A549 (cell line): ENCODE measurements at regions of chr1 and their contacts with region 1.

Region 1: GRCh38 chr1:200379431-200379755 is 30.4 kb downstream of the ZNF281 start:
- DNase-seq: peak; percentile 81 to 92
- ATAC-seq: peak; percentile 86 to 88
- H3K4me3 ChIP-seq: no peak overlapping the region
- H3K27ac ChIP-seq: peak overlapping the region; percentile 88 to 95
- H3K4me1 ChIP-seq: peaks cover 90% of the 10 kb centered on the region
- CTCF ChIP-seq: no peak
- EP300 ChIP-seq: peak; percentile 95 to 96
- POLR2A ChIP-seq: no peak
- RAD21 ChIP-seq: peak; percentile 34 to 71; a peak in 4 of 5 replicates

Region 2: DNA sequence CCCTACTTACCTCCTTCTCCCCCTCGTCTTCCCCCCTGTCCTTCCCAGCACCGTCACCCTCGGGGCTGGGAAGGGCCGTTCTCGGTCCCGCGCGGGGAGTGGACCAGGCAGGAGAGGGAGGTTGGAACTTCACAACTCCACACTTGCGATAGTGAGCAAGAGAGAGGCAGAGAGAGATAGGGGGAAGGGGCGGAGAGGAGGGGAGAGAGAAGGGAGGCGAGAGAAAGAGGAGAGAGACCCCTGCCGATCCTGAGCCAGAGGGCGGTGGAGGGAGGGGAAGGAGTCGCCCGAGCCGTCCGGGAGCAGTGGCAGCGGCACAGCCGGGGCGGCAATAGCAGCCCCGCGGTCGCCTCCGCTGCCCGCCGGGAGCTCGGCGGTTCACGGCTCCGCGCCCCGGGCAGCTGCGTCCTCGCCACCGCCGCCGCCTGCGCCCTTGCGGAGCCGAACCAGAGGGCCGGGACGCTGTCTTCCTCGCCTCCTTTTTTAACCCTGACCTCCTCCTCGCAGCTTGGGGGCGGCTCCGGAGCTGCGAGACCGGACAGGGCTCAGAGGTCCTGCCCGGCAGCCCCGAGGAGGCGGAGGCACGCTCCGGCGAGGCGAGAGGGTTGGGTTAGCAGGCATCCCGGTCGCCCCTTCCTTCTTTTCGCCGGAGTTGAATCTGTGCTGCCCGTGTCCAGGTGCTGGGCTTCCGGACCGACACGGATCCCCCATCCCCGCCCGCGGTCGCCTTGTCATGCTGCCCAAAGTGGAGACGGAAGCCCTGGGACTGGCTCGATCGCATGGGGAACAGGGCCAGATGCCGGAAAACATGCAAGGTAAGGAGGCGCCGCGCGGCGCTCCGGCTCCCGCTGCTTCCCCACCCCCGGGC is 340.2 kb before region 1 on chr1:
- CTCF ChIA-PET with region 1: no interaction called
- POLR2A ChIA-PET with region 1: interaction called, 11 read pairs
- DNase-seq: peak; percentile 41 to 71
- ATAC-seq: peak; percentile 67 to 74
- H3K4me3 ChIP-seq: peak overlapping the region; percentile 47
- H3K27ac ChIP-seq: peak overlapping the region; percentile 76 to 91
- H3K4me1 ChIP-seq: peaks cover 30% of the 10 kb centered on the region; the same call in 2 of the 3 replicates
- CTCF ChIP-seq: no peak
- EP300 ChIP-seq: no peak
- POLR2A ChIP-seq: peak; percentile 6; the same call in 1 of the 2 replicates
- RAD21 ChIP-seq: 0 out of 5 replicates have a peak, but pooled peaks of 1 of the 2 experiments have one; percentile 12